Mammary epithelial cell (primary cell): ENCODE measurements at regions of chr7 and their contacts with region 1.

Region 1: DNA sequence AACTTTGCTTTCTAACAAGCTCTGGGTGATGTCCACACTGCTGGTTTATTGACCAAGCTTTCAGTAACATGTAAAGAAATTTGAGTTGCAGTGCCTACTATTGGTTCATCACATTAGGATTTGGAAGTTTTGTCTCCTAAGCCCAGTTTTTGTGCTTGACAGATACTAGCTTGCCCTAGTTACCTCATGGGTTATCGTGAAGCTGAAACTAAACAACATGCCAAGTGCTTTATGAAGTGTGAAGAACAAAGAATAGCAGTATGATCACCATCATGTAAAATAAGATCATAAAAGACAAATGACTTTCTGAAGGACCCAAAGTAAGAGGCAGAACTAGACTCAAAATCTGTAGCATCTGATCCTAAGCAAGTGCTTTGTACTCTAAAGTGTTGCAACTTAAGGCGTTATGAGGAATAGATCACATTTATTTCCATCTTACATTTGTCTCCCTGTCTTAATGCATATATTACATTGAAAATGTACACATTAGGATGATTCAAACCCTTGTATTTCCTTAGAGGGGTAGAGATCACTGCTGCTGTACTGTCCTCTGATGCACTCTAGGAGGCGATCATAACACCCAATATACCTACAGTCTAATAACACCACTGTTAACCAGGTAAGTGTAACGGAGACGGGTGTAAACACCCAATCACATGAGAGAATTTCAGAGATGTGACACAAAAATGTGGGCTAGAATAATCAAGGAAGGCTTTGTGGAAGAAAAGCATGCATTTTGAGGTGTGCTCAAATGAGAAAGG is 71.3 kb downstream of the NRCAM start:
- DNase-seq: no peak
- H3K4me3 ChIP-seq: no peak overlapping the region
- H3K27ac ChIP-seq: no peak overlapping the region
- H3K4me1 ChIP-seq: no peaks in the 10 kb centered on the region
- H3K27me3 ChIP-seq: no peaks in the 10 kb centered on the region
- CTCF ChIP-seq: peak; percentile 19 to 33

Region 2: GRCh38 chr7:108452722-108453121 is 67.8 kb after region 1 on chr7:
- CTCF ChIA-PET with region 1: no interaction called
- dilution Hi-C with region 1: no loop called
- in situ Hi-C with region 1: no loop called
- intact Hi-C with region 1: loop called (anchors 5 kb)
- DNase-seq: peak; percentile 29
- H3K4me3 ChIP-seq: no peak overlapping the region
- H3K27ac ChIP-seq: no peak overlapping the region
- H3K4me1 ChIP-seq: peaks cover 6% of the 10 kb centered on the region
- H3K27me3 ChIP-seq: no peaks in the 10 kb centered on the region
- CTCF ChIP-seq: peak; percentile 40 to 65

Region 3: GRCh38 chr7:108805808-108806397 is 421.0 kb after region 1 on chr7:
- CTCF ChIA-PET with region 1: no interaction called
- dilution Hi-C with region 1: no loop called
- in situ Hi-C with region 1: no loop called
- intact Hi-C with region 1: no loop called
- DNase-seq: peak; percentile 4
- H3K4me3 ChIP-seq: no peak overlapping the region
- H3K27ac ChIP-seq: no peak overlapping the region
- H3K4me1 ChIP-seq: no peaks in the 10 kb centered on the region
- H3K27me3 ChIP-seq: no peaks in the 10 kb centered on the region
- CTCF ChIP-seq: peak; percentile 52 to 54